Breast epithelium (tissue), 4 donors: ENCODE measurements at regions of chr17 and their contacts with region 1.

Region 1: GRCh38 chr17:63998050-63998720 is at the start of gene PRR29:
- DNase-seq: peak in 1 of 2 donors; percentile 57
- H3K4me3 ChIP-seq: peak within 1 kb of the TSS; percentile 48 to 88 (median 71)
- H3K27ac ChIP-seq: peak within 1 kb of the TSS; percentile 13 to 22
- H3K4me1 ChIP-seq: peaks cover 0 to 8% of the 10 kb centered on the region in 2 donors
- H3K27me3 ChIP-seq: no peaks in the 10 kb centered on the region
- CTCF ChIP-seq: no peak
- POLR2A ChIP-seq: no peak
- total RNA-seq, gene PRR29: 0.15 to 1.3 (median 0.16) TPM

Region 2: DNA sequence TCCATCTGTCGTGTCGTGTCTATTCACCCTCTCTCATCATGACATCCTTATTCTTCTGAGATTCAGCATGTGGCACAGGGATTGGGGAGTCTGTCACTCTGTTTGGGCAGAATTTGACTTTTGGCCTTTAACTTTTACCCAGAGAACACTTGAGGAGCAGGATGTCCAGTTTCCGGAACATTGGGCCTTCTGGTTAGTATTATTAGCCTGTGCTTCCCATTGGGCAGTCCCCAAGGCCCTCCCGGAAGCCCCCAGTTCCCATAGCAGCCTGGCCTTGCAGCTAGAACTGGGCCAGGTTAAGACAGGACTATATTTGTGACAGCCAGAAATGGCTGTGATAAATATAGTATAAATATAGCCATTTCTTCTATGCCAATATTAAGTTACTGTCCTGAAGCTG is 35.1 kb before region 1 on chr17:
- intact Hi-C with region 1: loop called (anchors 1 kb)
- DNase-seq: no peak
- H3K4me3 ChIP-seq: no peak overlapping the region
- H3K27ac ChIP-seq: peak overlapping the region; percentile 58 to 92
- H3K4me1 ChIP-seq: no peaks in the 10 kb centered on the region
- H3K27me3 ChIP-seq: no peaks in the 10 kb centered on the region
- CTCF ChIP-seq: no peak
- POLR2A ChIP-seq: no peak

Region 3: GRCh38 chr17:64073771-64074703 is 75.9 kb after region 1 on chr17:
- intact Hi-C with region 1: no loop called
- DNase-seq: no peak
- H3K4me3 ChIP-seq: no peak overlapping the region
- H3K27ac ChIP-seq: peak overlapping the region; percentile 60 to 80
- H3K4me1 ChIP-seq: no peaks in the 10 kb centered on the region
- H3K27me3 ChIP-seq: no peaks in the 10 kb centered on the region
- CTCF ChIP-seq: no peak
- POLR2A ChIP-seq: no peak